Right lobe of liver (tissue), 6 donors: ENCODE measurements at regions of chr5 and their contacts with region 1.

Region 1: GRCh38 chr5:170747851-170748250 is 35.7 kb upstream of the GABRP start:
- DNase-seq: peak in 1 of 3 donors; percentile 39
- ATAC-seq: no peak
- H3K4me3 ChIP-seq: no peak overlapping the region
- H3K27ac ChIP-seq: no peak overlapping the region
- H3K4me1 ChIP-seq: peaks cover 0 to 4% (median 0%) of the 10 kb centered on the region in 4 donors
- H3K27me3 ChIP-seq: no peaks in the 10 kb centered on the region
- CTCF ChIP-seq: peak; percentile 14 to 24 (median 21)
- POLR2A ChIP-seq: no peak

Region 2: GRCh38 chr5:170896779-170897178 is 148.9 kb after region 1 on chr5:
- intact Hi-C with region 1: no loop called
- DNase-seq: no peak
- ATAC-seq: no peak
- H3K4me3 ChIP-seq: no peak overlapping the region
- H3K27ac ChIP-seq: no peak overlapping the region
- H3K4me1 ChIP-seq: no peaks in the 10 kb centered on the region
- H3K27me3 ChIP-seq: no peaks in the 10 kb centered on the region
- CTCF ChIP-seq: peak in 2 of 4 donors; percentile 9
- POLR2A ChIP-seq: no peak

Region 3: GRCh38 chr5:171342362-171343111 is 594.7 kb after region 1 on chr5:
- intact Hi-C with region 1: loop called in 1 of 2 experiments (anchors 10 kb)
- DNase-seq: peak in 1 of 3 donors; percentile 51
- ATAC-seq: peak; percentile 82 to 90 (median 84)
- H3K4me3 ChIP-seq: no peak overlapping the region
- H3K27ac ChIP-seq: no peak overlapping the region
- H3K4me1 ChIP-seq: no peaks in the 10 kb centered on the region
- H3K27me3 ChIP-seq: no peaks in the 10 kb centered on the region
- CTCF ChIP-seq: peak; percentile 61 to 65 (median 62)
- POLR2A ChIP-seq: no peak